Heart left ventricle (tissue), 16 donors: ENCODE measurements at regions of chr7 and their contacts with region 1.

Region 1: DNA sequence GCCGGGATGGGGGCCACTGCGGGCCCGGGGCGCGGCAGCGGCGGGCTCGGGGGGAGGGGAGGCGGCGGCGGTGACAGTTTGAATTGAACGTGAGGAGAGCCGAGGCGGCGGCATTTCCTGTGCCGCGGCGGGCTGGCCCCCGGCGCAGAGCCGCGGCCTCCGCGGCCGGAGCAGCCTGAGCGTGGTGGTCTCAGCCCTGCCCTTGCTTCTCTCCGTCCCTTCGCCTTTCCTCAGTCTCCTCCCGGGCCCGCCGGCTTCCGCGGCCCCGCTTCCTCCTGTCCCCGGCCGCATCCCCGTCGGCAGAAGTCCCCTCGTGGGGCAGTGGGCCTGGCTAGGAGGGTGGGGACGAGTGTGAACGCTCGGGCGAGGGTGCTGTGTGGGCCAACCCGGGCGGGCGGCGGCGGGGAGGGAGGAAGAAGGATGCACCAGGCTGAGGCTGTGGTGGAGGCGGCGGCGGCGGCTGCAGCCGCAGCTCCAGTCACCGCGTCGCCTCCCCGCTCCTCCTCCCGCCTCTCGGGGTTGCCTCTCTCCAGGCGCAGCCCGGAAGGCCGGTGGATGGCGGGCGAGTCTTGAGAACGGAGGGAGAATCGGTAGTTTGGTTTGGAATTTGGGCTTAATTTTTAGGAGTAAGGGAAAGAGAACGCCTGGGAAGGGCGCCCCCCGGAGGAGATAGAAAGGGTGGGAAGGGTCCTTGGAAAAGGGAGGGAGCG is 690 bp downstream of the SEPTIN7 start:
- DNase-seq: peak; percentile 74 to 87 (median 76)
- ATAC-seq: peak in 3 of 4 donors; percentile 23 to 65 (median 59)
- H3K4me3 ChIP-seq: peak overlapping the region; percentile 58 to 95 (median 88)
- H3K27ac ChIP-seq: peak overlapping the region; percentile 90 to 99 (median 97)
- H3K4me1 ChIP-seq: peaks cover 0 to 58% (median 36%) of the 10 kb centered on the region in 12 donors
- H3K27me3 ChIP-seq: no peaks in the 10 kb centered on the region
- CTCF ChIP-seq: peak; percentile 46 to 79 (median 64)
- POLR2A ChIP-seq: no peak

Region 2: DNA sequence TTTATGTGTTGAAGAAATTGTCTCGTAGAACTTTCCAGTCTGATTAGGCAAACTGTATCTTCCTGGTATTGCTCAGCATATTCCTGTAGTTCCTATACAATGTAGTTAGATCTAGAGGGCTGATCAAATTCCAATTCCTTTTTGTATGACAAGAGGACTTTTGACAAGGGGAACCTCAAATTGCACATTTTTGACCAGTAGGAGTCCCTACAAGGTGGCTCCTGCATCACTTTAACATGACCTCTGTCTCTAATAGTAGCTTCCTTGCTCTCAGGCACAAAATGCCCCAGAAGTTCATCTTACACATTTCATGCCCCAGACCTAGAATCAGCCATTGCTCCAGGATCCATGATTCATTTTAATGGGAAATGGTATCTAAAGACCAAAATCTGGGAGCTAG is 125.3 kb before region 1 on chr7:
- intact Hi-C with region 1: no loop called
- DNase-seq: no peak
- ATAC-seq: no peak
- H3K4me3 ChIP-seq: no peak overlapping the region
- H3K27ac ChIP-seq: no peak overlapping the region
- H3K4me1 ChIP-seq: peaks cover 0 to 52% (median 32%) of the 10 kb centered on the region in 12 donors
- H3K27me3 ChIP-seq: no peaks in the 10 kb centered on the region
- CTCF ChIP-seq: no peak
- POLR2A ChIP-seq: no peak

Region 3: GRCh38 chr7:35716038-35716803 is 85.3 kb before region 1 on chr7:
- intact Hi-C with region 1: loop called in 4 of 10 experiments (anchors 5 kb)
- DNase-seq: peak in 3 of 5 donors; percentile 41 to 60 (median 57)
- ATAC-seq: peak; percentile 52 to 73 (median 72)
- H3K4me3 ChIP-seq: peak overlapping the region in 10 of 12 donors; percentile 1 to 51 (median 41)
- H3K27ac ChIP-seq: peak overlapping the region in 11 of 12 donors; percentile 46 to 82 (median 71)
- H3K4me1 ChIP-seq: peaks cover 0 to 43% (median 7%) of the 10 kb centered on the region in 12 donors
- H3K27me3 ChIP-seq: no peaks in the 10 kb centered on the region
- CTCF ChIP-seq: no peak
- POLR2A ChIP-seq: no peak

Region 4: GRCh38 chr7:35753761-35754603 is 47.6 kb before region 1 on chr7:
- intact Hi-C with region 1: loop called in 2 of 10 experiments (anchors 5 to 10 kb)
- DNase-seq: peak; percentile 61 to 78 (median 68)
- ATAC-seq: peak; percentile 67 to 88 (median 82)
- H3K4me3 ChIP-seq: no peak overlapping the region
- H3K27ac ChIP-seq: peak overlapping the region; percentile 6 to 75 (median 50)
- H3K4me1 ChIP-seq: peaks cover 0 to 58% (median 18%) of the 10 kb centered on the region in 12 donors
- H3K27me3 ChIP-seq: no peaks in the 10 kb centered on the region
- CTCF ChIP-seq: no peak
- POLR2A ChIP-seq: no peak

Region 5: DNA sequence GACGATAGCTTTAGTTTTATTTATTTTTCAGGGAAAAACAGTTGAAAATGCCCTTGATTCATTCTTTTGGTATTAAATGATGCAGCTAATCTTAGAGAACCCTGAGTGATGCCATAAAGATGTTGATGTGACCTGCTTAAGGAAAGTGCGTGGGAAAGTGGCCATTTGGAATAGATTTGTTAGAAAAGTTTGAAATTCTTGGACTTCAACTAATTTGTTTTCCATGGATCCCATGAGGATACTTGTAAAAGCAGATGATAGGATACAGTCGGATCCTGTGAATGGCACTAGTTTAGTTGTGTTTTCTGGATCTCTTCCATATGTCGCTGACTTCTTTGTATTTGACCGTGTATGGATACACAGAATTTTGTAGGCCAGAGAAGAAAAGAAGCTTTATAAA is 68.3 kb after region 1 on chr7:
- intact Hi-C with region 1: loop called in 3 of 10 experiments (anchors 5 to 10 kb)
- DNase-seq: peak in 1 of 5 donors; percentile 30
- ATAC-seq: peak in 2 of 4 donors; percentile 60 to 77
- H3K4me3 ChIP-seq: no peak overlapping the region
- H3K27ac ChIP-seq: peak overlapping the region in 8 of 12 donors; percentile 5 to 74 (median 35)
- H3K4me1 ChIP-seq: peaks cover 0 to 61% (median 33%) of the 10 kb centered on the region in 12 donors
- H3K27me3 ChIP-seq: no peaks in the 10 kb centered on the region
- CTCF ChIP-seq: no peak
- POLR2A ChIP-seq: no peak

Region 6: DNA sequence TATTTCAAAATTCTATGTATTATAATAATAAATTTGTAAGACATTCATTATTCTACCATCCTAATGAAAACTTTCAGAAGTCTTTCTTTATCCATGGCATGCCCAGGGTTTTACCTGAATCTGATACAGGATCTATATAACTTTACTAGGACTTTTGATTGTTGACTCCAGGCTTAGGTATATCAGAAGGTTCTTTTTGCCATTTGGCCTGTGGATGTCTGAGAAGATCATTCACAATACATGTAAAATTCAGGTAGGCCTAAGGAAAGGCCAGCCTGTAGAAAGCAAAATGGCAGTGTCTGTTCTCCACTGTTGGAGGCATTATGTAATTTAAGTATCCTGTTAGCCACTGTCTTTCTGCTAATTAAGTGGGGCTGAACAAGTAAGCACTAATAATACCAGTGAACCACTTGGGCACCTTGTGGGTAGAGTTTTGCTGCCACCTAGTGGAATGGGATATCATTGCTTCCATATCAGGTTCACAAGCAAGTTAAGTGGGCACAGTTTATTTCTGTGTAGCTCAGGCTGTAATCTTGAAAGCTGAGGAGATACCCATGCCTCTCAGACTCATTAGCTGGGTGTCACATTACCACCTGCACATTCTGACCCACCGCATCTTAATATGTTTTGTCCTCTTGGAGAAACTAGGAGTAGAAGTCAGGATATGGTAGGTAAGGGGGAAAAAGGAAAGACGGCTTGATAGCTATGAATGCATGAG is 104.8 kb after region 1 on chr7:
- intact Hi-C with region 1: loop called in 8 of 10 experiments (anchors 2 to 10 kb)
- DNase-seq: peak in 4 of 5 donors; percentile 31 to 61 (median 48)
- ATAC-seq: peak; percentile 72 to 91 (median 88)
- H3K4me3 ChIP-seq: no peak overlapping the region
- H3K27ac ChIP-seq: no peak overlapping the region
- H3K4me1 ChIP-seq: peaks cover 0 to 21% (median 5%) of the 10 kb centered on the region in 12 donors
- H3K27me3 ChIP-seq: no peaks in the 10 kb centered on the region
- CTCF ChIP-seq: peak; percentile 83 to 97 (median 94)
- POLR2A ChIP-seq: no peak